CD4-positive, alpha-beta T cell (primary cell): ENCODE measurements at regions of chr20 and their contacts with region 1.

Region 1: DNA sequence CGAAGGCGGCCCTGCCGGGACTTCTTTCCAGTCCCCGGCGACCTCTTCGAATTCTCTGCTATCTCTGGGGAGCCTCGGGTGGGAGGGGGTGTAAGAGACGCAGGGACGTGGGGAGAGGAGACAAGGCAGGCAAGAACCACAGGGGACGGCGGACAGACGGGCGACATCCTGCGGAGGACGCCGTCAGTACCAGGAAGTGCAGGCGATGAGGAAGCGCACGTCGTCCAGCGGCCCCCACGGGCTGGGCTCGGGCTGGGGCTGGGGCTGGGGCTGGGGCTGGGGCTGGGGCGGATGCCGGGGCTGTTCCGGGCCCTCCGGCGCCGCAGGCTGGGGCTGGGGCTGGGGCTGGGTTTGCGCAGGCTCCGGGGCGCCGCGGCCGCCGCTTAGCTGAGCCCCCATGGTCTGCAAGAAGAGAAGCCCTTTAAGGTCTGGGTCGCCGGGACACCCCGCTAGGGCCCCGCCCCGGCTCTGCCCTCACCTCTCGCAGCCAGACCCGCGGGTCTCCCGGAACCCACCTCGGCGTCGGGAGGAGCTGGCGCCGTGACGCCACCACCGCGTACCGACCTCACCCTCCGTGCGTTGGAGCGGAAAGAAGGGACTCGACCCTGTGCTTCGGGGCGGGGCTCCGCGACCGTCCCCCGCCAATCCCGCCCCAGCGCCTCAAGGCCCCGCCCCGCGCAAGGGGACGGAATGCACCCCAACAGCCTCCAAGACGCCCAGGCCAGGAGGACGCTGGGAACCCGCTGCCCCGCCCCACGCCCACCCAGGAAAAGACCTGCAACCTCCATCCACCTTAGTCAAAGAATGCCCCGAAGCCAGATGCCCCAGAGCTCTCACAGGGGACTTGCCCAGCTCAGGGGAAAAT is at the start of gene MMP24OS:
- DNase-seq: peak; percentile 79 to 96 (median 86)
- ATAC-seq: peak; percentile 86
- H3K4me3 ChIP-seq: peak within 1 kb of the TSS; percentile 76
- H3K4me3 Mint-ChIP-seq: peak within 1 kb of the TSS; percentile 96
- H3K27ac ChIP-seq: peak within 1 kb of the TSS; percentile 93 to 95
- H3K27ac Mint-ChIP-seq: peak within 1 kb of the TSS; percentile 97
- H3K4me1 ChIP-seq: peaks cover 39% of the 10 kb centered on the region
- H3K4me1 Mint-ChIP-seq: peaks cover 35% of the 10 kb centered on the region
- H3K27me3 ChIP-seq: no peaks in the 10 kb centered on the region
- H3K27me3 Mint-ChIP-seq: no peaks in the 10 kb centered on the region
- CTCF ChIP-seq: peak; percentile 20
- total RNA-seq, gene MMP24OS: 71.8 to 74.8 TPM

Region 2: DNA sequence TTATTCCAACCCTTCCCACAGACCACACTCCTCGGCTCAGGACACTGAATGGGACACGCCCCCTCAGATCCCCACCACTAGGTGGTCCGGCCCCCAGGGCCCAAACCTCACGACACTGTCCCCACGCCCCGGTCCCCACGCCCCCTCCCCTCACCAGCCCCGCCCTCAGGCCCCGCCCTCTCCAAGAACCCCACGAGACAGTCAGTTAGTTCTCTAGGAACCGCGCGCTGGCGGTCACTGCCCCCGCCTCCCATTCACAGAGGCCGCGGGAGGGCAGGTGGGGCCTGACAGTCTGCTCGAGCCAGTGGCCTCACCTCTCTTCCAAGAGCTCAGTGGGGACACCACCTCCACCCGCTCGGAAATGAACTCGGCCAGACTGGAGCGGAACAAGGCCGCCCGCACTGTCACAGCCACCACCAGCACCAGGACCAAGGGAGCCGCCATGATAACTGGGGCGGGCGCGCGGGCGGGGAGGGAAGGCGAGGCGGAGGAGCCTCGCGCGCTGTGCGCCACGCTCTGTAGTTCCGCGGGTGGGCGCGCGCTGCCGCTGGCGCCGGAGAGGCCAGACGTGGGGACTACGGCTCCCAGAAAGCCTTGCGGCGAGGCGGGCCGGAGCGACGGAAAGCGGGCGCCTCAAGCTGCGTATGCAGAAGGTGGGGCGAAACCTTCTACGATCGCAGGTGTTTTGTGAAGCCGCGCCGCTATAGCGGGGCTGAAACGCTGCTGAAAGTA is 601.0 kb before region 1 on chr20 and contains the start of gene PIGU:
- CTCF ChIA-PET with region 1: no interaction called
- POLR2A ChIA-PET with region 1: no interaction called
- intact Hi-C with region 1: loop called in 1 of 2 experiments (anchors 10 kb)
- DNase-seq: peak; percentile 93 to 98 (median 95)
- ATAC-seq: peak; percentile 96
- H3K4me3 ChIP-seq: peak within 1 kb of the TSS; percentile 88
- H3K4me3 Mint-ChIP-seq: peak within 1 kb of the TSS; percentile 93
- H3K27ac ChIP-seq: peak within 1 kb of the TSS; percentile 53 to 87
- H3K27ac Mint-ChIP-seq: peak within 1 kb of the TSS; percentile 88
- H3K4me1 ChIP-seq: peaks cover 13% of the 10 kb centered on the region
- H3K4me1 Mint-ChIP-seq: peaks cover 26% of the 10 kb centered on the region
- H3K27me3 ChIP-seq: no peaks in the 10 kb centered on the region
- H3K27me3 Mint-ChIP-seq: no peaks in the 10 kb centered on the region
- CTCF ChIP-seq: peak; percentile 21
- total RNA-seq, gene PIGU: 4.6 to 5.5 TPM

Region 3: GRCh38 chr20:34825530-34826362 is 452.0 kb before region 1 on chr20 and contains the start of gene NCOA6:
- CTCF ChIA-PET with region 1: no interaction called
- POLR2A ChIA-PET with region 1: interaction called, 3 read pairs
- intact Hi-C with region 1: loop called in 1 of 2 experiments (anchors 5 kb)
- DNase-seq: peak; percentile 77 to 95 (median 84)
- ATAC-seq: peak; percentile 75
- H3K4me3 ChIP-seq: peak within 1 kb of the TSS; percentile 70
- H3K4me3 Mint-ChIP-seq: peak within 1 kb of the TSS; percentile 99
- H3K27ac ChIP-seq: peak within 1 kb of the TSS; percentile 35 to 66
- H3K27ac Mint-ChIP-seq: peak within 1 kb of the TSS; percentile 92
- H3K4me1 ChIP-seq: peaks cover 35% of the 10 kb centered on the region
- H3K4me1 Mint-ChIP-seq: peaks cover 47% of the 10 kb centered on the region
- H3K27me3 ChIP-seq: no peaks in the 10 kb centered on the region
- H3K27me3 Mint-ChIP-seq: no peaks in the 10 kb centered on the region
- CTCF ChIP-seq: no peak
- total RNA-seq, gene NCOA6: 14.6 to 16.3 TPM

Region 4: DNA sequence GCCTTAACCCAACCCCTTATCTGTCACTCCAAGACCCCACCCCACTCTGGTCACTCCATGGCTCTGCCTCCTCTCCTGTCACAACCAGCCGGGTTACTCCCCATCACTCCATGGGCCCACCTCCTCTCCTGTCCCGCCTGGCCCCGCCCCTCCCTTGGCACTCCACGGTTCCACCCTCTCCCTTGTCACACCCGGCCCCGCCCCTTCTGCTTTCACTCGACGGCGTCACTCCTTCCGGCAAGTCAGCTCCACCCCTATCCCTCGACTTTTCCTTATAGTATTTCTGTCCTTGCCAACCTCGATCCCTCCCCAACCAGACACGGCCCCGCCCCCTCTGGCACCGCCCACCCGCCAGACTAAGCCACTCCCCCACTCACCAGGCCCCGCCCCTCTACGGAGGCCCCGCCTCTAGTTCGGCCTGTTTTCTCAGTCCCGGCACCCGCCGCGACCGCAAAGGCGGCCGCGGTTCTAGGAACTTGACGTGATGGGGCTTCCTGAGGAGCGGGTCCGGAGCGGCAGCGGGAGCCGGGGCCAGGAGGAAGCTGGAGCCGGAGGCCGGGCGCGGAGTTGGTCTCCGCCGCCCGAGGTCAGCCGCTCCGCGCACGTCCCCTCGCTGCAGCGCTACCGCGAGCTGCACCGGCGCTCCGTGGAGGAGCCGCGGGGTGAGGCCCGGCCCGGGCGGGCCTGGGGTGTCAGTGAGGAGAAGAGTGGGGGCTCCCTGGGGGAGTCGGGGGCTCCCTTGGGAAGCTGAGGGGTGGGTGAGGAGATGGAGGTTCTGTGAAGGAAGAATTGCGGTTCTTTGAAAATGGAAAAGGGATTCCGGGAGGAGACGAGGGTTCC is 401.4 kb before region 1 on chr20 and contains the start of gene ACSS2:
- CTCF ChIA-PET with region 1: no interaction called
- POLR2A ChIA-PET with region 1: no interaction called
- intact Hi-C with region 1: loop called in 1 of 2 experiments (anchors 5 kb)
- DNase-seq: peak; percentile 91 to 99 (median 94)
- ATAC-seq: peak; percentile 81
- H3K4me3 ChIP-seq: peak within 1 kb of the TSS; percentile 70
- H3K4me3 Mint-ChIP-seq: peak within 1 kb of the TSS; percentile 90
- H3K27ac ChIP-seq: peak within 1 kb of the TSS; percentile 11 to 42
- H3K27ac Mint-ChIP-seq: peak within 1 kb of the TSS; percentile 81
- H3K4me1 ChIP-seq: peaks cover 51% of the 10 kb centered on the region
- H3K4me1 Mint-ChIP-seq: peaks cover 66% of the 10 kb centered on the region
- H3K27me3 ChIP-seq: no peaks in the 10 kb centered on the region
- H3K27me3 Mint-ChIP-seq: no peaks in the 10 kb centered on the region
- CTCF ChIP-seq: no peak
- total RNA-seq, gene ACSS2: 15.6 to 18.8 TPM

Region 5: DNA sequence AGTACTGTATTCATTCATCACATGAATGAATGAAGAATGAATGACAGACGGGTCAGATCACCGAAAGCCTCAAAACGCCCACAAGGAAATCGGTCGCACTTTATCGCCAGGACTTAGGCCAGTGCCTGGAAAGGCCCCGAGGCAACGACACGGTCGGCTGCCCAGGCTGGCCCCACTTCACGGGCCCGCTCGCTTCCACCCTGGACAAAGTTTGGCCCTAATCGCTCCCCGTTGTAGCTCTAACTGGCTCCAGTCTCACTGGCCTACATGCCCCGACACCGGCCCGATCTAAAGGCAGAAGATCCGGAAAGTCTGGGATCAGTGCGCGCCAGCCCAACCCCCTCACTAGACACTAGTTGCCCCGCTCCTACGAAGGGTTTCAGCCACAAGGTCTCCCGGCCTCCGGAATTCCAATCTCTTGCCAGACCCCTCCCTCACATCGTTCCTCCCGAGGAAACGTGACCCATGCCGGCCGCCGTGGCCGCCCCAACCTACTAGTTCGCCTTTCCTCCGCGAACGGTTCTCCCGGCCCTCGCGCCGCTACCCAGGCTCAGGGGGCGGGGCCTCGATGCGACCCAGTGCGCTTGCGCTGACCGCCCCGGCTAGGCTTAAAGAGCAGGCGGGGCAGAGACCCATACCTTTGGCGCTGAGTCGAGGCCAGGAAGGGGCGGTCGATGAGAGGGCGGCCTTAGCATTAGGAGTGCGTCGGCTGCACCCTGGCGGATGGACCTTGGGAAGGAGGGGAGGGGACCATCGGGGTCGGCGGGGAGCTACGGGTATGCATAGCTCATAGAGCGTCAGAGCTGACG is 322.3 kb before region 1 on chr20 and contains the starts of genes GSS and MYH7B:
- CTCF ChIA-PET with region 1: no interaction called
- POLR2A ChIA-PET with region 1: interaction called, 4 read pairs
- intact Hi-C with region 1: loop called in 1 of 2 experiments (anchors 5 kb)
- DNase-seq: peak; percentile 90 to 98 (median 96)
- ATAC-seq: peak; percentile 92
- H3K4me3 ChIP-seq: peak within 1 kb of the TSS; percentile 87
- H3K4me3 Mint-ChIP-seq: peak within 1 kb of the TSS; percentile 94
- H3K27ac ChIP-seq: peak within 1 kb of the TSS; percentile 62 to 70
- H3K27ac Mint-ChIP-seq: peak within 1 kb of the TSS; percentile 91
- H3K4me1 ChIP-seq: peaks cover 19% of the 10 kb centered on the region
- H3K4me1 Mint-ChIP-seq: peaks cover 23% of the 10 kb centered on the region
- H3K27me3 ChIP-seq: no peaks in the 10 kb centered on the region
- H3K27me3 Mint-ChIP-seq: no peaks in the 10 kb centered on the region
- CTCF ChIP-seq: no peak
- total RNA-seq, gene GSS: 24.3 to 24.7 TPM
- total RNA-seq, gene MYH7B: 0.53 to 0.58 TPM

Region 6: GRCh38 chr20:35092524-35093266 is 185.1 kb before region 1 on chr20 and contains the start of gene TRPC4AP:
- CTCF ChIA-PET with region 1: interaction called, 5 read pairs
- POLR2A ChIA-PET with region 1: interaction called, 7 read pairs
- intact Hi-C with region 1: loop called in 1 of 2 experiments (anchors 2 kb)
- DNase-seq: peak; percentile 78 to 96 (median 86)
- ATAC-seq: peak; percentile 98
- H3K4me3 ChIP-seq: peak within 1 kb of the TSS; percentile 99
- H3K4me3 Mint-ChIP-seq: peak within 1 kb of the TSS; percentile 91
- H3K27ac ChIP-seq: peak within 1 kb of the TSS; percentile 72 to 76
- H3K27ac Mint-ChIP-seq: peak within 1 kb of the TSS; percentile 83
- H3K4me1 ChIP-seq: peaks cover 40% of the 10 kb centered on the region
- H3K4me1 Mint-ChIP-seq: peaks cover 53% of the 10 kb centered on the region
- H3K27me3 ChIP-seq: no peaks in the 10 kb centered on the region
- H3K27me3 Mint-ChIP-seq: no peaks in the 10 kb centered on the region
- CTCF ChIP-seq: peak; percentile 85
- total RNA-seq, gene TRPC4AP: 56.3 to 60.6 TPM

Region 7: GRCh38 chr20:35454881-35455609 is 177.3 kb after region 1 on chr20 and contains the start of gene CEP250:
- CTCF ChIA-PET with region 1: no interaction called
- POLR2A ChIA-PET with region 1: interaction called, 15 read pairs
- intact Hi-C with region 1: no loop called
- DNase-seq: peak; percentile 87 to 97 (median 94)
- ATAC-seq: peak; percentile 96
- H3K4me3 ChIP-seq: peak within 1 kb of the TSS; percentile 91
- H3K4me3 Mint-ChIP-seq: peak within 1 kb of the TSS; percentile 97
- H3K27ac ChIP-seq: peak within 1 kb of the TSS; percentile 83 to 94
- H3K27ac Mint-ChIP-seq: peak within 1 kb of the TSS; percentile 87
- H3K4me1 ChIP-seq: peaks cover 19% of the 10 kb centered on the region
- H3K4me1 Mint-ChIP-seq: peaks cover 29% of the 10 kb centered on the region
- H3K27me3 ChIP-seq: no peaks in the 10 kb centered on the region
- H3K27me3 Mint-ChIP-seq: no peaks in the 10 kb centered on the region
- CTCF ChIP-seq: no peak
- total RNA-seq, gene CEP250: 27.6 to 33.1 TPM